B cell (primary cell): ENCODE measurements at regions of chr4 and their contacts with region 1.

Region 1: DNA sequence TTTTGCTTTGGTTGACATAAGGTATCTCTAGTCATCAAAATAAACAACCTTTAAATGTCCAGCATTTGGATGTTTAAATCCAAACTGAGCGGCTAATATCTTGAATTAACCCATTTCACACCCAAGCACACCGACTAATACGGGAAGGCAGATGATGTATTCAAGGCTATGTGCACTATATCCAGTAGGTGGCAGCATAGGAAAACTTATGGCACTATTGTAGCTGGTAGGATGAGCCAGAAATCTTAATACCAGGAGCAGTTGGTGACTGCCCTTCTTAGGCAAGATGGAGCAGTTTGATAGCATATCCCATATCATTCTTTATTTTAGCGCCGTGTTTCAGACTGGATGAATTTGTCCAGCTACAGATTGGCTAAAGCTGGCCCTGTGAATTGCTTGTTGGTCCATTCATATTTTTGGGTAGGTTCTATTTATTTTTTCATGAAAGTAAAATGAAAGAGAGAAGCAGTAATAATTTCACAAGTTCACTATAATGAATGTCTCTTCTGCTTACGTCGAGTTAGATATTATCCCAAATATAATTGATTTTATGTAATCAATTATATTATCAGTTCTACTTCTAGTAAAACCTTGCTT is 24.4 kb downstream of the UCHL1 start:
- DNase-seq: peak; percentile 71
- ATAC-seq: peak; percentile 71
- H3K4me3 ChIP-seq: no peak overlapping the region
- H3K4me3 Mint-ChIP-seq: no peak overlapping the region
- H3K27ac ChIP-seq: no peak overlapping the region
- H3K27ac Mint-ChIP-seq: no peak overlapping the region
- H3K4me1 ChIP-seq: no peaks in the 10 kb centered on the region
- H3K4me1 Mint-ChIP-seq: no peaks in the 10 kb centered on the region
- H3K27me3 ChIP-seq: peaks cover 0 to 2% (median 0%) of the 10 kb centered on the region in 4 experiments
- H3K27me3 Mint-ChIP-seq: peaks cover 7% of the 10 kb centered on the region
- CTCF ChIP-seq: peak; percentile 96

Region 2: GRCh38 chr4:41661442-41662076 is 380.4 kb after region 1 on chr4:
- CTCF ChIA-PET with region 1: interaction called, 96 read pairs
- POLR2A ChIA-PET with region 1: interaction called, 3 read pairs
- intact Hi-C with region 1: loop called (anchors 1 kb)
- DNase-seq: peak; percentile 41
- ATAC-seq: peak; percentile 33
- H3K4me3 ChIP-seq: no peak overlapping the region
- H3K4me3 Mint-ChIP-seq: no peak overlapping the region
- H3K27ac ChIP-seq: no peak overlapping the region
- H3K27ac Mint-ChIP-seq: no peak overlapping the region
- H3K4me1 ChIP-seq: no peaks in the 10 kb centered on the region
- H3K4me1 Mint-ChIP-seq: no peaks in the 10 kb centered on the region
- H3K27me3 ChIP-seq: no peaks in the 10 kb centered on the region
- H3K27me3 Mint-ChIP-seq: peaks cover 20% of the 10 kb centered on the region
- CTCF ChIP-seq: peak; percentile 98

Region 3: DNA sequence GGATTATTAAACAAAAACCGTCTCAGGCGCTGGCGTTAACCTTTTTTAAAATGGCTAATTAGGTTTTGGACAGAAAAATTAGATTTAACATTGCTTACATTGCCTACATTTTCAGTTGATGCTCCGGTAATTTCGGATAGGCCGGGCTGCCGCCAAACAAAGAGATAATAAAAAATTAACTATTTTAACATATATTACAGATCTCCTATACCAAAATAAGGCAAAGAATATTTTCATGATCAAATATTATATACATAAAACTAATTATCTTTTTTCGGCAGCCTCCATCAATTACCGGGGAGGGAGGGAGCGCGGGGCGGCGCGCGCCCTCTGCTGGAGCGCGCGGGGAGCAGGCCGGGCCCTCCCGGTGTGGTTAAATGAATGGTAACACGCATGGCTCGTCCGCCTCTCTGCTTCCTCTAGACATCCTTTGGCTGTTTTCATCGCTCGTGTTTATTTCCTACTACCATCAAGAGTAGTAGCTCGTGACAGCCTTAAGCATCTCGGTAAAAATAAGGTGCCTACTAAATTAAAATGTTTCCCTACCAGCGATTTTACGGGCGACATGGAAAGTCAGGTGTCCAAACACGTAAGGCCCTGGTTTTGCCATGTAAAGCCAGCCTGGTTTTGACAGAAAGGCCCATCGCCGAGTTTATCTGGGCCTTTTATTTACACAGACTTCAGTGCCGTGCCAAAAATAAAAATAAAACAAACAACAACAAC is 601.6 kb after region 1 on chr4:
- CTCF ChIA-PET with region 1: interaction called, 111 read pairs
- POLR2A ChIA-PET with region 1: no interaction called
- intact Hi-C with region 1: loop called (anchors 1 kb)
- DNase-seq: peak; percentile 71
- ATAC-seq: peak; percentile 82
- H3K4me3 ChIP-seq: peak overlapping the region; percentile 23 to 51 (median 34)
- H3K4me3 Mint-ChIP-seq: peak overlapping the region; percentile 79
- H3K27ac ChIP-seq: no peak overlapping the region
- H3K27ac Mint-ChIP-seq: no peak overlapping the region
- H3K4me1 ChIP-seq: peaks cover 22 to 33% of the 10 kb centered on the region in 2 donors
- H3K4me1 Mint-ChIP-seq: peaks cover 15% of the 10 kb centered on the region
- H3K27me3 ChIP-seq: peaks cover 0 to 48% (median 31%) of the 10 kb centered on the region in 4 experiments
- H3K27me3 Mint-ChIP-seq: peaks cover 77% of the 10 kb centered on the region
- CTCF ChIP-seq: peak; percentile 99

Region 4: GRCh38 chr4:41887821-41888686 is 606.9 kb after region 1 on chr4:
- CTCF ChIA-PET with region 1: interaction called, 111 read pairs
- POLR2A ChIA-PET with region 1: no interaction called
- intact Hi-C with region 1: loop called (anchors 1 kb)
- DNase-seq: peak; percentile 56
- ATAC-seq: no peak
- H3K4me3 ChIP-seq: no peak overlapping the region
- H3K4me3 Mint-ChIP-seq: no peak overlapping the region
- H3K27ac ChIP-seq: no peak overlapping the region
- H3K27ac Mint-ChIP-seq: no peak overlapping the region
- H3K4me1 ChIP-seq: no peaks in the 10 kb centered on the region
- H3K4me1 Mint-ChIP-seq: no peaks in the 10 kb centered on the region
- H3K27me3 ChIP-seq: peaks cover 0 to 6% (median 0%) of the 10 kb centered on the region in 4 experiments
- H3K27me3 Mint-ChIP-seq: peaks cover 55% of the 10 kb centered on the region
- CTCF ChIP-seq: peak; percentile 93